SK-N-SH (cell line): ENCODE measurements at regions of chr5 and their contacts with region 1.

Region 1: GRCh38 chr5:6745706-6746222 is 32.5 kb downstream of the TENT4A start:
- DNase-seq: peak; percentile 71
- H3K4me3 ChIP-seq: no peak overlapping the region; a peak in 1 of 4 replicates
- H3K27ac ChIP-seq: no peak overlapping the region; a peak in 1 of 4 replicates
- H3K4me1 ChIP-seq: peaks cover 0 to 10% of the 10 kb centered on the region in 2 experiments; a peak in 1 of 4 replicates
- H3K27me3 ChIP-seq: no peaks in the 10 kb centered on the region
- CTCF ChIP-seq: peak; percentile 90
- EP300 ChIP-seq: no peak
- RAD21 ChIP-seq: peak; percentile 84

Region 2: GRCh38 chr5:6728011-6728794 is 17.6 kb before region 1 on chr5:
- CTCF ChIA-PET with region 1: interaction called, 37 read pairs
- POLR2A ChIA-PET with region 1: no interaction called
- DNase-seq: peak; percentile 57
- H3K4me3 ChIP-seq: no peak overlapping the region
- H3K27ac ChIP-seq: peak overlapping the region in 1 of 2 experiments; percentile 36; a peak in 2 of 4 replicates
- H3K4me1 ChIP-seq: peaks cover 48 to 61% of the 10 kb centered on the region in 2 experiments
- H3K27me3 ChIP-seq: no peaks in the 10 kb centered on the region
- CTCF ChIP-seq: no peak
- EP300 ChIP-seq: no peak
- RAD21 ChIP-seq: no peak

Region 3: GRCh38 chr5:6849316-6850105 is 103.7 kb after region 1 on chr5:
- CTCF ChIA-PET with region 1: no interaction called
- POLR2A ChIA-PET with region 1: no interaction called
- DNase-seq: no peak
- H3K4me3 ChIP-seq: no peak overlapping the region
- H3K27ac ChIP-seq: no peak overlapping the region
- H3K4me1 ChIP-seq: no peaks in the 10 kb centered on the region
- H3K27me3 ChIP-seq: no peaks in the 10 kb centered on the region
- CTCF ChIP-seq: no peak
- EP300 ChIP-seq: no peak
- RAD21 ChIP-seq: no peak